ENCODE measurements at regions of chr5 and their contacts with region 1.

Region 1: DNA sequence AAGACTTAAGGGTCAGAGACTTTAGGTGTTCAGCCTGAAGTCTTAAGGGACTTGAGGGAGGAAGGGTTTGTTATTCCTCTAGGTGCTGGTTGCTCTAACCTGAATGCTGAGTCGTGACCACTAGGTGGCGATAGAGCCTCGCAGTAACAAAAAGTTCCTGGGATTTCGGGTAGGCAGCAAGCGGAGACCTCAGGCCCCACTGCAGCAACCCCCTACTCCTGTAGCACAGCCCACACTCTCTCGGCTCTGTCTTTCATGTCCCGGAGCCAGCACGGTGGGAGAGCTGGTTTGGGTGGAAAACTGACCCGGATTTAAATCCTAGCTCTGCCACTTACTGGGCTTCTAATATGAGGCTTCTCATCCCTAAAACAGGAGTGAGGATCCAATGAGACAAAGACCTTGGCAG is 100.3 kb upstream of the PANK3 start:
- DNase-seq: peak; percentile 23 to 73 (median 48)
- ATAC-seq: no peak
- H3K4me3 ChIP-seq: no peak overlapping the region
- H3K4me3 Mint-ChIP-seq: no peak overlapping the region
- H3K27ac ChIP-seq: no peak overlapping the region
- H3K27ac Mint-ChIP-seq: no peak overlapping the region
- H3K4me1 ChIP-seq: peaks cover 12% of the 10 kb centered on the region
- H3K4me1 Mint-ChIP-seq: peaks cover 14% of the 10 kb centered on the region
- H3K27me3 ChIP-seq: no peaks in the 10 kb centered on the region
- H3K27me3 Mint-ChIP-seq: no peaks in the 10 kb centered on the region
- CTCF ChIP-seq: peak; percentile 87

Region 2: DNA sequence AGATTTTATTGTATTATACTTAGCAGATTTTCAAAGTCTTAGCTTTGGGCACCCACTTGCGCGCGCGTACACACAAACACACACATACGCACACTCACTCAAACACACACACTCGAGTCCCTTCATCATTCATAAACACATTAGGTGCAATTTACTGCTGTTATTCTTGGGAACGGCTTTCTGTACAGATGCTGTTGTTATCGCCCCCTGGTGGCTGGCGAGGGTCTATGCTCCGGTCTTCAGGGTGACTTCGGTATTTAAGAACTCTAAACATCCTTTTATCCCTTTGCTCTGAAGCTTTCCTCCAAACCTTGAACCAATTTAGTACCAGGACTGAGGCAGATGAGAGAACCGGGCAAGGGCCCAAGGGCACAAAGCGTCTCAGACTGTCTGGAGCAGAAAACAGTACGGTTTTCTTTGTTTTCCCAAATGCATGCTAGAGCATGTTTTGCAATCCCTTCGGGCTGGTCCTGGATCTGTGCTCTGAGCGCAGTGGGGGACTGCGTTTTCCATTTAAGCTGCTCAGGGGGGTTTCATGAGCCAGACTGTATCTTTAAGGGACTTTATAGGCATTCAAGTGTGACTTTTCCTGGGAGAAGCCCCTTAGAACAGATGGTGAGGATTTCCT is 623.1 kb after region 1 on chr5:
- CTCF ChIA-PET with region 1: no interaction called
- POLR2A ChIA-PET with region 1: no interaction called
- intact Hi-C with region 1: loop called in 1 of 2 experiments (anchors 5 kb)
- DNase-seq: peak in 12 of 14 experiments; percentile 3 to 55 (median 22)
- ATAC-seq: no peak
- H3K4me3 ChIP-seq: no peak overlapping the region
- H3K4me3 Mint-ChIP-seq: no peak overlapping the region
- H3K27ac ChIP-seq: no peak overlapping the region
- H3K27ac Mint-ChIP-seq: no peak overlapping the region
- H3K4me1 ChIP-seq: peaks cover 4% of the 10 kb centered on the region
- H3K4me1 Mint-ChIP-seq: peaks cover 9% of the 10 kb centered on the region
- H3K27me3 ChIP-seq: peaks cover 13 to 37% of the 10 kb centered on the region in 2 experiments
- H3K27me3 Mint-ChIP-seq: peaks cover 82% of the 10 kb centered on the region
- CTCF ChIP-seq: peak; percentile 39

Measured in CD4-positive, alpha-beta T cell (primary cell).